ENCODE measurements at regions of chr3 and their contacts with region 1.

Region 1: GRCh38 chr3:14391033-14391432 is 11.4 kb upstream of the SLC6A6 start:
- DNase-seq: no peak
- H3K4me3 ChIP-seq: no peak overlapping the region
- H3K27ac ChIP-seq: no peak overlapping the region
- H3K4me1 ChIP-seq: no peaks in the 10 kb centered on the region
- H3K27me3 ChIP-seq: no peaks in the 10 kb centered on the region
- CTCF ChIP-seq: no peak
- POLR2A ChIP-seq: no peak

Region 2: DNA sequence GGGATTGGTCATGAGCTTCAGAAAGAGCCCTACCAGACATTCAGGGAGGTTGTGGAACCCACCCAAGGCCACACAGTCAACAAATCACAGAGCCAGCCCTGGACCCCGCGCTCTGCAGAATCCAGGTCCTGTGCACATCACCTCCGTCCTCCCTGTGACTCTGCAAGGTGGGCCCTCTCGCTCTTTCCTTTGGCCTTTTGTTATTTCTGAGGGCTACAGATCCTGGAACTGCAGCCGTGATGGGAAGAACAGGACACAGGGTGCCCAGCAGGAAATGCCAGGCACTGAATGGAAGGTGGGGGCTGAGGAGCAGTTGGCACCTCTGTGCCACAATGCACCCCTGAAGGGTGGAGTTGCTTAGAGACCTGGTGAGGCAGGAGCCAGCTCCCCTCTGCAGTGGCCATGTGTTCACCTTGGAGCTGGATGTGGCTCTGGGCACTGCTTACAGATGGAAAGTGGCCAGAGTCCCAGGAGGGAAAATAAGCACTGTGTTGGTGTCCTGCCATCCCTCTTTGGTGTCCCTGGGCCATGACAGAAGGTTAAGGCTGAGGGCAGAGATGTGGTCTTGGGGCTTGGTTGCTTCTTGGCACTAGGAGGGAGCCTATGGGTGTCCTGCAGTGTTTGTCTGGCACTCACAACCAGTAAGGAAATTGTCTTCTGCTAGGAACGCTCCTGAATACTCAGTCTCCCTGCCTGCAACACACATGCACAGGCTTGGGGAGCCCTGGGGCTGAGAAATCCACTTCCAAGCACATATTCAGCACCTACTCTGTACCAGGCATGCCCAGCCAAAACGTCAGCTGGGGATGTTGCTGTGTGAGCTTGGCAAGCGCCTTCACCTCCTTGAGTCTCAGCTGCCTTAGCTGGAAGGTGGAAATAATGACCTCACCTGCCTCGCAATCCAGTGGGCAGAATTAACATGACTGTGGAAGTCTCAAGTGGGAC is 86.7 kb before region 1 on chr3:
- intact Hi-C with region 1: loop called (anchors 5 kb)
- DNase-seq: peak; percentile 36
- H3K4me3 ChIP-seq: no peak overlapping the region
- H3K27ac ChIP-seq: peak overlapping the region in 1 of 2 donors; percentile 54
- H3K4me1 ChIP-seq: peaks cover 7% of the 10 kb centered on the region
- H3K27me3 ChIP-seq: no peaks in the 10 kb centered on the region
- CTCF ChIP-seq: no peak
- POLR2A ChIP-seq: no peak

Region 3: GRCh38 chr3:14352002-14352627 is 38.9 kb before region 1 on chr3:
- intact Hi-C with region 1: no loop called
- DNase-seq: no peak
- H3K4me3 ChIP-seq: no peak overlapping the region
- H3K27ac ChIP-seq: no peak overlapping the region
- H3K4me1 ChIP-seq: no peaks in the 10 kb centered on the region
- H3K27me3 ChIP-seq: no peaks in the 10 kb centered on the region
- CTCF ChIP-seq: no peak
- POLR2A ChIP-seq: no peak